H1 (cell line): ENCODE measurements at regions of chr11 and their contacts with region 1.

Region 1: GRCh38 chr11:14373931-14374646 is 15.1 kb upstream of the RRAS2 start:
- DNase-seq: peak in 1 of 2 experiments; percentile 20
- H3K4me3 ChIP-seq: no peak overlapping the region
- H3K27ac ChIP-seq: no peak overlapping the region
- H3K4me1 ChIP-seq: peaks cover 0 to 8% (median 3%) of the 10 kb centered on the region in 4 experiments; a peak in 3 of 7 replicates
- H3K27me3 ChIP-seq: no peaks in the 10 kb centered on the region
- CTCF ChIP-seq: no peak
- EP300 ChIP-seq: no peak
- POLR2A ChIP-seq: no peak
- RAD21 ChIP-seq: no peak

Region 2: DNA sequence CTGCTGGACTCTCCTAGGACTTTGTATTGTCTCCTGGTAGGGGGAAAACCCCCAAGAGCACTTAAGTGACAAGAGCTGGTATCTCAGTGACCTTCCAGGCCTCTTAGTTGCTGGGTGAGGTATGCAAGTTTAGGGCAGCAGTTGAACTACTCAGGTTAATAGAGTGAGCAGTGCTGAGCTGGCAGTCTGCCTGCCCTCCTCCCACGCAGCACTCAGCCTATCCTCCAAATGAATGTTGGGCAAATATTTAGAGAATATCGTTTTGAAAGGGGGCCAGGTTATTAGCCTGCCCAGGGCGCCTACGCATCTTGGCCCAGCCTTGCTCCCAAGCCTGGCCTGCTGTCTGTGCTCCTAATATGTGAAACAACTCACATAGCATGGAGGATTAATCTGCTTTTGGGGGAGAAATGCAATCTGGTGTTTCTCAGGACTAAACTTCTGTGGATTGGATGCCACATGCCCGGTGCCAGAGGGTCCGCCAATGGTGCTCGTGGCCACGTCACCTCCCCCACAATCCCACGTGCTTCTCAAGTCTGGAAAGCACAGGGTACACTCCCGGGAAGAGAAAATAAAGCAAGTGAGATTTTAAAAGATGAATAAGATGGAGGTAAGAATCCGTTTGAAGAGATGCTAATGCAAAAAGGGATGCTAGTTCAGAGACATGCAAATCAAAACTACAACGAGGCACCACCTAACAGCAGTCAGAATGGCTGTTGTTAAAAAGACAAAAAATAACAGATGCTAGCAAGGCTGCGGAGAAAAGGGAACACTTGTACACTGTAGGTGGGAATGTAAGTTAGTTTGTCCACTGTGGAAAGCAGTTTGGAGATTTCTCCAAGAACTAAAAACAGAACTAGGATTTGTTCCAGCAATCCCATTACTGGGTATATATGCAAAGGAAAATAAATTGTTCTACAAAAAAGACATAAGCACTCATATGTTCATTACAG is 343.8 kb before region 1 on chr11:
- CTCF ChIA-PET with region 1: no interaction called
- POLR2A ChIA-PET with region 1: no interaction called
- DNase-seq: no peak
- H3K4me3 ChIP-seq: no peak overlapping the region
- H3K27ac ChIP-seq: no peak overlapping the region
- H3K4me1 ChIP-seq: peaks cover 0 to 4% (median 0%) of the 10 kb centered on the region in 4 experiments; a peak in 1 of 7 replicates
- H3K27me3 ChIP-seq: no peaks in the 10 kb centered on the region
- CTCF ChIP-seq: no peak
- EP300 ChIP-seq: no peak
- POLR2A ChIP-seq: no peak
- RAD21 ChIP-seq: no peak

Region 3: DNA sequence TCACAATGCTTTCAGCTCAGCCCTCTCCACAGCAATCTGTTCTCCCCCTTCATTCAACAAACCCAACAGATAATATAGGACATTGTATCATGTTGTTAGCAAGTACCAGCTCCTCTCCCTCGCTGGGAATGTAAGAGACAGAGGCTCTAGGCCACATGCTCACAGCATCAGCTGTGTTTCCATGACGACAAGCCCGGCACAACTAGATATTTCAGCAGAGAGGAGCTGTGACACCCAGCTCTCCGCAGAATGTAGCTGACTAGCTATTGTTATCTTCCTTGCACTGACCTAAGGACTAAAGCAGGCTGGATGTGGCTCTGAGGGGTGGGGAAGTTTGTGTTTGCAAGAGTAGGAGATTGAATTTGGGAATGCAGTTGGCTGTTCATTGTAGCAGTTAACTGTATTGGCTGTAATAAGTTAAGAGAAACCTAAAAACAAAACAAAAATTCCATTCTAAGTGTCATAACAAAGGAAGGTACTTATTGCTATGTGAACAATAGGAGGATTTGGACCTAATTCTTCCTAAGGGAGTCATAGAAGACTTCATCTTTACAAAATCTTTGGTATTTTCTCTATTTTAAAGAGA is 12.9 kb after region 1 on chr11:
- CTCF ChIA-PET with region 1: interaction called, 15 read pairs
- POLR2A ChIA-PET with region 1: interaction called, 4 read pairs
- DNase-seq: peak; percentile 15 to 66
- H3K4me3 ChIP-seq: no peak overlapping the region
- H3K27ac ChIP-seq: no peak overlapping the region
- H3K4me1 ChIP-seq: peaks cover 0 to 9% (median 3%) of the 10 kb centered on the region in 4 experiments; a peak in 2 of 7 replicates
- H3K27me3 ChIP-seq: peaks cover 0 to 4% (median 1%) of the 10 kb centered on the region in 4 experiments; a peak in 4 of 7 replicates
- CTCF ChIP-seq: no peak
- EP300 ChIP-seq: no peak
- POLR2A ChIP-seq: no peak
- RAD21 ChIP-seq: no peak